Left colon (tissue), 2 donors: ENCODE measurements at regions of chr7 and their contacts with region 1.

Region 1: DNA sequence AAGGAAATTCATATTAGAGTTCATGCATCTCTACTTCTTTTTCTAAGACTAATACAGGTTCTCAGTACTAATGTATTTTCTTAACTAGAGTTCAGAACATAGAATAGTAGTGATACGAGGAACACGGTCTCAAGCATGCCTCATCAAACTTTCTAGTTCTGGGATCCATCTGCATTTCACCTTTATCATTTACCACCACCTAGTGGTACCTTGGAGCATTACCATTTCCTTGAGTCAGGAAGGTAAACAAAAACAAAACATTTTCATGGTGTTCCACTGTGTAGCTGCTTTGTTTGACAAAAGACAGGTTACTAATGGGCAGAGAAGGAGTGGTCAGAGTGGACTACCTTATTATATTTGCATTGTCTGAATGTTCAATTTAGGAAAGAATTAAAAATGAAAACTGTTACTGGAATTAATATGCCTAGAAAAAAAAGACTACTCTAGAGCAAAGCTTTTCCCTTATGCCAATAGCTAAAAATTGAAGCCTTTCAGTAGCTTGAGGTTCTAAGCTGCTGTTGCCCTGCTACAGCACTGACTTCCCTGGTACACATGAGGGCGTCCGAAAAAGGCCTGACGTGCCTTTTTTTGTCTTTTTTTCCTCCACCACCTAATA is 44.5 kb downstream of the STARD3NL start:
- DNase-seq: no peak
- ATAC-seq: peak; percentile 85

Region 2: GRCh38 chr7:38107486-38107893 is 115.1 kb before region 1 on chr7:
- intact Hi-C with region 1: loop called (anchors 2 to 10 kb)
- DNase-seq: peak; percentile 29 to 79
- ATAC-seq: peak; percentile 86

Region 3: GRCh38 chr7:38374507-38374906 is 151.9 kb after region 1 on chr7:
- intact Hi-C with region 1: no loop called
- DNase-seq: peak in 1 of 2 donors; percentile 35
- ATAC-seq: no peak